Activated CD4-positive, alpha-beta memory T cell treated with anti-CD3 and anti-CD28 coated beads for 36 hours (primary cell): ENCODE measurements at regions of chr1 and their contacts with region 1.

Region 1: GRCh38 chr1:52601991-52602855 is at the start of gene GPX7:
- DNase-seq: peak; percentile 65
- H3K4me3 Mint-ChIP-seq: peak within 1 kb of the TSS; percentile 91
- H3K27ac Mint-ChIP-seq: peak within 1 kb of the TSS; percentile 90
- H3K4me1 Mint-ChIP-seq: peaks cover 40% of the 10 kb centered on the region
- H3K27me3 Mint-ChIP-seq: no peaks in the 10 kb centered on the region
- total RNA-seq, gene GPX7: 19.9 to 20.6 TPM

Region 2: GRCh38 chr1:52659356-52659755 is 57.1 kb after region 1 on chr1:
- CTCF ChIA-PET with region 1: no interaction called
- POLR2A ChIA-PET with region 1: no interaction called
- intact Hi-C with region 1: loop called (anchors 5 kb)
- DNase-seq: peak; percentile 66
- H3K4me3 Mint-ChIP-seq: peak overlapping the region; percentile 46
- H3K27ac Mint-ChIP-seq: peak overlapping the region; percentile 85
- H3K4me1 Mint-ChIP-seq: peaks cover 21% of the 10 kb centered on the region
- H3K27me3 Mint-ChIP-seq: no peaks in the 10 kb centered on the region